ENCODE measurements at regions of chr3 and their contacts with region 1.

Region 1: DNA sequence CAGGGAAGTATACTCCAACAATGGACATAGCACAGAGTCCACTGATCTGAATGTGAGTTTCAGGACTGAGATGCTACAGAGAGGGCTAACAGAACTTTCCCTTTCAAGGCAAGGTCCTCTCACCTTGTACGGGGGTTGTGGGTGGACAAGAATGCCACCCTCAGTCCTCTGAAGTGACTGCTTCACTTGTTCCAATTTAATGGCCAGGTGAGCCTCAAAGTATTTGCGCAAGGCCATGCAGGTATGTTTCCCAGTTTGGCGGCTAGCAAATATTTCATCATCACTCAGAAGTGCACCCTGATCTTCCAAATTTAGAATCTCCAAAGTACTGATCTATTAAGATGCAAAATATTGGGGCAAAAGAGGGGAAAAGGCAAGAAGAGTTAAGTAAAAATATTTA is 38.1 kb downstream of the RBM15B start:
- DNase-seq: no peak
- H3K4me3 ChIP-seq: no peak overlapping the region
- H3K27ac ChIP-seq: no peak overlapping the region
- H3K4me1 ChIP-seq: no peaks in the 10 kb centered on the region
- H3K27me3 ChIP-seq: no peaks in the 10 kb centered on the region
- CTCF ChIP-seq: no peak

Region 2: DNA sequence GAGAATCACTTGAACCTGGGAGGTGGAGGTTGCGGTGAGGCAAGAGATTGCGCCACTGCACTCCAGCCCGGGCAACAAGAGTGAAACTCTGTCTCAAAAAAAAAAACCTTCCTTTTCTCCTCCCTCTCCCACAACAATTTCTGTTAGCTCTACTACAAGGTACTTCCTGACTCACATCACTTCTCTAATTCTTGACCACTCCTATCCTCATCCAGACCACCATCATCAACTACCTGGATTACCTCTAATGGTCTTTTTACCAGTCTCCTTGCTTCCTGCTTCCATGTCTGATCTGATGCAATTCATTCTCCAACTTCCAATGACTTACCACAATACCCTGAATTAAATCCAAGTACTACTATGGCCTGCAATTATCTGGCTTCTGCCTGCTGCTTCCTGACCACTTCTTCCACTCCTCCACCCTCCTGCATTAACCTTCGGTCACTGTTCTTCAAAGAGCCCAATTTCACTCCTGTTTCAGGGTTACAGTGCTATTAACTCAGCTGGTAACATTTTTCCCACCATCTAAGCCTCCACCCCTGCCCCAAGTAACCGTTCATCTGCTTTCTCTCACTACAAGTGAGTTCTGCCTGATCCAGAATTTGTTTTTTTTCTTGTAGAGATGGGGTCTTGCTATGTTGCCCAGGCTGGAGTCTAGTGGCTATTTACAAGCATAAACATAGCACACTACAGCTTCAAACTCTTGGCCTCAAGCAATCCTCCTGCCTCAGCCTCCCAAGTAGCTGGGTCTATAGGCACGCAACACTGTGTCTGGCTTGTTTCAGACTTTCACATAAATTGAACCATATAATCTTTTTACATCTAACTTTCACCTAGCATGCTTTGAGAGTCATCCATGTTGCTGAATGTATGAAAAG is 42.9 kb after region 1 on chr3:
- CTCF ChIA-PET with region 1: no interaction called
- POLR2A ChIA-PET with region 1: no interaction called
- intact Hi-C with region 1: loop called (anchors 10 kb)
- DNase-seq: no peak
- H3K4me3 ChIP-seq: no peak overlapping the region
- H3K27ac ChIP-seq: no peak overlapping the region
- H3K4me1 ChIP-seq: no peaks in the 10 kb centered on the region
- H3K27me3 ChIP-seq: no peaks in the 10 kb centered on the region
- CTCF ChIP-seq: no peak

Region 3: GRCh38 chr3:51498876-51499738 is 70.0 kb after region 1 on chr3:
- CTCF ChIA-PET with region 1: no interaction called
- POLR2A ChIA-PET with region 1: no interaction called
- intact Hi-C with region 1: no loop called
- DNase-seq: peak; percentile 83 to 95
- H3K4me3 ChIP-seq: peak overlapping the region; percentile 61
- H3K27ac ChIP-seq: peak overlapping the region; percentile 78
- H3K4me1 ChIP-seq: no peaks in the 10 kb centered on the region; the same call in 1 of the 2 replicates
- H3K27me3 ChIP-seq: no peaks in the 10 kb centered on the region
- CTCF ChIP-seq: no peak